Activated CD8-positive, alpha-beta T cell treated with anti-CD3 and anti-CD28 coated beads, Interleukin-2, amount 10 ng/mL, durations not matched to agents 7 days and 5 days (primary cell): ENCODE measurements at regions of chr1 and their contacts with region 1.

Region 1: DNA sequence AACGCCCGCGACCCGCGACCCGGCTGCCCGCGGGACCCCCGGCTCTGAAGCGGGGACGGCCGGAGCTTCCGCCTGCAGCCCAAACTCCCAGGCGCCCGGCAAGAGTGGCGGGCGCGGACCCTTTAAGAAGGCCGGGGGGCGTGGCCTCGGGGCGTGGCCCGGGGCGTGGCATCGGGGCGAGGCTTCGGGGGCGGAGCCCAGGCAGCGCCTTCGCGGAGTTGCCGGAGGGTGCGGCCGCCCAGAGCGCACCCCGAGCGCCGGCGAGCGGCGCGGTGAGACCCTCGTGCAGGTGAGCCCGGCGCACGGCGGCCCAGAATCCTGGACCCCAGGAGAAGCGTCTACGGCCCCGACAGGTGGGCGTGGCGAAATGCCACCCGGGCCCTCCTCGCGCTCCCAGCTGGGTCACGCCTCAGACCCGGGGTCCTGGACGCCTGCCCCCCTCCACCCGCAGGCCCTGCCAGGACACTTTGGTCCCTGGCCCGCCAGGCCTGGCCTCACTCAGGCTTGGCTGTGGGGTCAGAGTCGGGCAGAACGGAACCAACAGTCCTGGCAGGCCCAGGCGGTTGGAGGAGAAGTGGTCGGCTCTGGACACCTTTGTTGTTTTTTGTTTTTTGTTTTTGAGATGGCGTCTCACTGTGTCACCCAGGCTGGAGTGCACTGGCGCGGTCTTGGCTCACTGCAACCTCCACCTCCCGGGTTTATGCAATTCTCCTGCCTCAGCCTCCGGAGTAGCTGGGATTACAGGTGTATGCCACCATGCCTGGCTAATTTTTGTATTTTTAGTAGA is 14.4 kb downstream of the RNF223 start:
- DNase-seq: peak; percentile 95
- ATAC-seq: peak; percentile 76
- H3K4me3 Mint-ChIP-seq: peak overlapping the region; percentile 83
- H3K27ac Mint-ChIP-seq: no peak overlapping the region
- H3K4me1 Mint-ChIP-seq: peaks cover 51% of the 10 kb centered on the region
- H3K27me3 Mint-ChIP-seq: peaks cover 3% of the 10 kb centered on the region

Region 2: GRCh38 chr1:966135-966610 is 93.5 kb before region 1 on chr1 and contains the start of gene PLEKHN1:
- CTCF ChIA-PET with region 1: no interaction called
- POLR2A ChIA-PET with region 1: no interaction called
- DNase-seq: peak; percentile 53
- ATAC-seq: peak; percentile 55
- H3K4me3 Mint-ChIP-seq: peak within 1 kb of the TSS; percentile 81
- H3K27ac Mint-ChIP-seq: peak within 1 kb of the TSS; percentile 90
- H3K4me1 Mint-ChIP-seq: peaks cover 15% of the 10 kb centered on the region
- H3K27me3 Mint-ChIP-seq: peaks cover 14% of the 10 kb centered on the region
- total RNA-seq, gene PLEKHN1: 1.7 to 2.2 TPM

Region 3: GRCh38 chr1:983799-984473 is 75.8 kb before region 1 on chr1:
- CTCF ChIA-PET with region 1: interaction called, 28 read pairs
- POLR2A ChIA-PET with region 1: no interaction called
- DNase-seq: peak; percentile 68
- ATAC-seq: peak; percentile 80
- H3K4me3 Mint-ChIP-seq: no peak overlapping the region
- H3K27ac Mint-ChIP-seq: no peak overlapping the region
- H3K4me1 Mint-ChIP-seq: no peaks in the 10 kb centered on the region
- H3K27me3 Mint-ChIP-seq: peaks cover 23% of the 10 kb centered on the region

Region 4: DNA sequence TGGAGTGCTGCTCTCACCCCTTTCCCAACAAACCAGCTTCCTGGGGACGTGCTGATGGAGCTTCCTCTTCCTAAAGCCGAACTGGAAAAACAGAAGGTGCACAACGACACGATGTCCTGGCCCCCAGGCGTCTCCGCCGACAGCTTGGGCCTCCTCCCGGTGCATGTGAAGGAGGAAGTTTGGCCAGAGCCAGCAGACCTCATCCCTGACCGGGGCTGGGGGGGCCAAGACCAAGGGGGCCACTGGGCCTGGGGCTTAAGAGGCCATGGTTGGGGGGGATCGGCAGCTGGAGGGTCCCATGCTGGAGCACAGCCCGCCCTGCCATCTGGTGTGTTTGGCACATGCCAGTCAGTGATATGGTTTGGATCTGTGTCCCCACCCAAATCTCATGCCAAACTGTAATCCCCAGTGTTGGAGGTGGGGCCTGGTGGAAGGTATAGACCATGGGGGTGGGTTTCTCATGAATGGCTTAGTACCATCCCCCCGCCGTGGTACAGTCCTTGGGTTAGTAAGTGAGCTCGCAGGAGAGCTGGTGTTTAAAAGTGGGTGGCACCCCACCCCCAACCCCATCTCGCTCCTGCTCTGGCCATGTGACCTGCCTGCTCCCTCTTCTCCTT is 66.2 kb before region 1 on chr1:
- CTCF ChIA-PET with region 1: interaction called, 11 read pairs
- POLR2A ChIA-PET with region 1: no interaction called
- DNase-seq: no peak
- ATAC-seq: no peak
- H3K4me3 Mint-ChIP-seq: no peak overlapping the region
- H3K27ac Mint-ChIP-seq: no peak overlapping the region
- H3K4me1 Mint-ChIP-seq: peaks cover 22% of the 10 kb centered on the region
- H3K27me3 Mint-ChIP-seq: peaks cover 44% of the 10 kb centered on the region

Region 5: DNA sequence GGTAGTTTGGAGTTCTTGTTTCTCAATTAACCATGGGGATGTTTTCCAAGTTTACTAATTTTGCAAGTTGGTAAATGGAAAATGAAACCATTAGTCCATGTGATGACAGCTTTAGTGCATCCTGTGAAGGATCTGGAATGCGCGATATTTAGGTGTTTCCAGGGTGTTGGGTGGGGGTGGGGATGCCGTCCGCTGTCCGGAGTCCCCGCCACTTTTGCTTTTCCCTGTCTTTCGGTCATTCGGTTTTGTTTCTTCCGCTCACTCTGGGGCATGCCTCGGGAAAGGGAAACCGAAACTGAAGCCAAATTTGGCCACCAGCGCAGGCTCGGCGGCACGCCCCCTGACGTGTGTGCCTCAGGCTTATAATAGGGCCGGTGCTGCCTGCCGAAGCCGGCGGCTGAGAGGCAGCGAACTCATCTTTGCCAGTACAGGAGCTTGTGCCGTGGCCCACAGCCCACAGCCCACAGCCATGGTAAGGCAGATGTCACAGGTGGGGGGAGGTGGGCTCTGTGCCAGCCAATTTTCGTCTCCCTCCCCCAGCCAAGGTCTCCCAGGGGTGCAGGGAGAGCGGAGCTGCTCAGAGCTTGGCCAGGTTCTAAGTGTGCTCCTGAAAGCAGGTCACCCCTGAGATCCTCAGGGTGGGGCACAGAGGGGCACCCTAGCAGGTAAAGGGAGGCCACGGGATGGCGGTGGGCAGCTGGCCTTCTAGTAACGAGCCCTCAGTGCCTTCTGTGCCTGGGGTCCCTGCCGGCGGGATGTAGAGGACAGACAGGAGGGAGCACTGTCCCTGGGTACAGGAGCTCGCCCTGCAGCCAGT is 46.4 kb before region 1 on chr1 and contains the start of gene ISG15:
- CTCF ChIA-PET with region 1: interaction called, 18 read pairs
- POLR2A ChIA-PET with region 1: interaction called, 15 read pairs
- DNase-seq: peak; percentile 95
- ATAC-seq: peak; percentile 90
- H3K4me3 Mint-ChIP-seq: peak within 1 kb of the TSS; percentile 97
- H3K27ac Mint-ChIP-seq: peak within 1 kb of the TSS; percentile 99
- H3K4me1 Mint-ChIP-seq: peaks cover 49% of the 10 kb centered on the region
- H3K27me3 Mint-ChIP-seq: peaks cover 4% of the 10 kb centered on the region
- total RNA-seq, gene ISG15: 385 to 413 TPM

Region 6: GRCh38 chr1:1019122-1019999 is 40.3 kb before region 1 on chr1:
- CTCF ChIA-PET with region 1: interaction called, 18 read pairs
- POLR2A ChIA-PET with region 1: interaction called, 15 read pairs
- DNase-seq: peak; percentile 86
- ATAC-seq: peak; percentile 80
- H3K4me3 Mint-ChIP-seq: peak overlapping the region; percentile 65
- H3K27ac Mint-ChIP-seq: peak overlapping the region; percentile 69
- H3K4me1 Mint-ChIP-seq: peaks cover 41% of the 10 kb centered on the region
- H3K27me3 Mint-ChIP-seq: peaks cover 4% of the 10 kb centered on the region

Region 7: GRCh38 chr1:1033009-1033587 is 26.6 kb before region 1 on chr1:
- CTCF ChIA-PET with region 1: interaction called, 52 read pairs
- POLR2A ChIA-PET with region 1: interaction called, 26 read pairs
- DNase-seq: peak; percentile 95
- ATAC-seq: peak; percentile 93
- H3K4me3 Mint-ChIP-seq: peak overlapping the region; percentile 46
- H3K27ac Mint-ChIP-seq: no peak overlapping the region
- H3K4me1 Mint-ChIP-seq: peaks cover 12% of the 10 kb centered on the region
- H3K27me3 Mint-ChIP-seq: peaks cover 2% of the 10 kb centered on the region

Region 8: GRCh38 chr1:1040004-1040991 is 19.4 kb before region 1 on chr1:
- CTCF ChIA-PET with region 1: interaction called, 27 read pairs
- POLR2A ChIA-PET with region 1: interaction called, 26 read pairs
- DNase-seq: peak; percentile 90
- ATAC-seq: peak; percentile 89
- H3K4me3 Mint-ChIP-seq: peak overlapping the region; percentile 49
- H3K27ac Mint-ChIP-seq: peak overlapping the region; percentile 58
- H3K4me1 Mint-ChIP-seq: peaks cover 27% of the 10 kb centered on the region
- H3K27me3 Mint-ChIP-seq: peaks cover 2% of the 10 kb centered on the region